ENCODE measurements at regions of chr10 and their contacts with region 1.

Region 1: GRCh38 chr10:14500172-14500765 is 169.5 kb upstream of the FRMD4A start:
- DNase-seq: no peak
- H3K4me3 Mint-ChIP-seq: no peak overlapping the region
- H3K27ac Mint-ChIP-seq: no peak overlapping the region
- H3K4me1 Mint-ChIP-seq: peaks cover 14% of the 10 kb centered on the region
- H3K27me3 Mint-ChIP-seq: peaks cover 5% of the 10 kb centered on the region

Region 2: DNA sequence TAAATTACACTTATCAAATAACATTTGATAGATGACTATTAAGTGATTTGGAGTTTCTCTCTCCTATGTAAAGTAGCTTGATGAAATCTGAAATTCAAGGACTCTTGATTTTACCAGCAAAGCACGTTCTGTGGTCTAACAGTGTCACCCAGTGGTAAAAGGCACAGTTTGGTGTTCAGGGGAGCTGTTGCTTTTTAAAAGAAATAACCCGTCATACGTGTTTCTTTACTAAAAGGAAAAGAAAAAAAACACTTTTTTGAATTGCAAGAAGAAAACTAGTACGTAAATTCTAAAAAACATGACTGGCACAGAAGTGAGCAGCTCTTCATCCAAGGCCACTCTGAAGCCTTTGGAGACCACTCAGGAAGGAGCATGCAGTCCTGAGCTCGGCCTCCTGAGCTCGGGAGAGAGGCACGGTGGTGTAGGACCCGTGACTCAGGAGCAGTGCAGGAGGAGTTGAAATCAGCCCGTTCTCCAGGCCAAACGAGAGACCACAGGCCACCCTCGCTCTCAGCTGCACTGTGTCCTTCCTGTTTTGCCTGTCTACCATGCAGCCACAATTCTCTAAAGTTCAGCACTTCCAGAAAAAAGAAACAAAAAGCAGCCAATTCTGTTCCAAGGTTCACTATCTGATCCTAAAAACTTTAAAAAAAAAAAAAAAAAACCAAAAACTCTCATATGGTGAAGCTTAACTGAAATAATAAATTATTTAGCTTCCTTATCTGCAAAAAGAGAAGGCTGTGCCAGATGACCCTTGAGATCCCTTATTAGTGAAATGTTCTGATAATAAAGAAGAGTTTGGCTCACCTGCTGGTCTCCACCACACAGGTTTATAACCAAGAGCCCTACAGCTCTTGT is 43.0 kb after region 1 on chr10:
- CTCF ChIA-PET with region 1: interaction called, 18 read pairs
- DNase-seq: peak; percentile 59
- H3K4me3 Mint-ChIP-seq: peak overlapping the region; percentile 36
- H3K27ac Mint-ChIP-seq: peak overlapping the region; percentile 90
- H3K4me1 Mint-ChIP-seq: peaks cover 80% of the 10 kb centered on the region
- H3K27me3 Mint-ChIP-seq: no peaks in the 10 kb centered on the region

Region 3: GRCh38 chr10:14751014-14751896 is 251.0 kb after region 1 on chr10:
- CTCF ChIA-PET with region 1: no interaction called
- DNase-seq: no peak
- H3K4me3 Mint-ChIP-seq: no peak overlapping the region
- H3K27ac Mint-ChIP-seq: no peak overlapping the region
- H3K4me1 Mint-ChIP-seq: no peaks in the 10 kb centered on the region
- H3K27me3 Mint-ChIP-seq: peaks cover 15% of the 10 kb centered on the region

Measured in activated naive CD4-positive, alpha-beta T cell treated with anti-CD3 and anti-CD28 coated beads, Interleukin-2, amount 10 ng/mL, durations not matched to agents 7 days and 5 days (primary cell).